ENCODE measurements at regions of chr1 and their contacts with region 1.

Region 1: GRCh38 chr1:92994105-92994712 is 32.9 kb upstream of the DIPK1A start:
- DNase-seq: peak; percentile 59 to 64
- H3K4me3 ChIP-seq: no peak overlapping the region
- H3K4me3 Mint-ChIP-seq: no peak overlapping the region
- H3K27ac Mint-ChIP-seq: no peak overlapping the region
- H3K4me1 ChIP-seq: 0 out of 2 replicates have a peak, but pooled peaks cover 3% of the 10 kb centered on the region
- H3K4me1 Mint-ChIP-seq: no peaks in the 10 kb centered on the region
- H3K27me3 ChIP-seq: no peaks in the 10 kb centered on the region
- H3K27me3 Mint-ChIP-seq: no peaks in the 10 kb centered on the region
- CTCF ChIP-seq: peak; percentile 40 to 51

Region 2: GRCh38 chr1:92461364-92462097 is 532.7 kb before region 1 on chr1:
- CTCF ChIA-PET with region 1: no interaction called
- POLR2A ChIA-PET with region 1: no interaction called
- intact Hi-C with region 1: no loop called
- DNase-seq: no peak
- H3K4me3 ChIP-seq: no peak overlapping the region
- H3K4me3 Mint-ChIP-seq: no peak overlapping the region
- H3K27ac Mint-ChIP-seq: no peak overlapping the region
- H3K4me1 ChIP-seq: no peaks in the 10 kb centered on the region; the same call in 1 of the 2 replicates
- H3K4me1 Mint-ChIP-seq: no peaks in the 10 kb centered on the region
- H3K27me3 ChIP-seq: no peaks in the 10 kb centered on the region
- H3K27me3 Mint-ChIP-seq: no peaks in the 10 kb centered on the region
- CTCF ChIP-seq: no peak

Region 3: GRCh38 chr1:92960395-92961130 is 33.6 kb before region 1 on chr1:
- CTCF ChIA-PET with region 1: interaction called, 14 read pairs
- POLR2A ChIA-PET with region 1: no interaction called
- intact Hi-C with region 1: loop called (anchors 1 kb)
- DNase-seq: peak; percentile 62 to 63
- H3K4me3 ChIP-seq: peak overlapping the region; percentile 78
- H3K4me3 Mint-ChIP-seq: peak overlapping the region; percentile 81
- H3K27ac Mint-ChIP-seq: peak overlapping the region; percentile 78
- H3K4me1 ChIP-seq: peaks cover 28% of the 10 kb centered on the region
- H3K4me1 Mint-ChIP-seq: peaks cover 18% of the 10 kb centered on the region
- H3K27me3 ChIP-seq: no peaks in the 10 kb centered on the region
- H3K27me3 Mint-ChIP-seq: no peaks in the 10 kb centered on the region
- CTCF ChIP-seq: peak; percentile 58 to 64

Region 4: DNA sequence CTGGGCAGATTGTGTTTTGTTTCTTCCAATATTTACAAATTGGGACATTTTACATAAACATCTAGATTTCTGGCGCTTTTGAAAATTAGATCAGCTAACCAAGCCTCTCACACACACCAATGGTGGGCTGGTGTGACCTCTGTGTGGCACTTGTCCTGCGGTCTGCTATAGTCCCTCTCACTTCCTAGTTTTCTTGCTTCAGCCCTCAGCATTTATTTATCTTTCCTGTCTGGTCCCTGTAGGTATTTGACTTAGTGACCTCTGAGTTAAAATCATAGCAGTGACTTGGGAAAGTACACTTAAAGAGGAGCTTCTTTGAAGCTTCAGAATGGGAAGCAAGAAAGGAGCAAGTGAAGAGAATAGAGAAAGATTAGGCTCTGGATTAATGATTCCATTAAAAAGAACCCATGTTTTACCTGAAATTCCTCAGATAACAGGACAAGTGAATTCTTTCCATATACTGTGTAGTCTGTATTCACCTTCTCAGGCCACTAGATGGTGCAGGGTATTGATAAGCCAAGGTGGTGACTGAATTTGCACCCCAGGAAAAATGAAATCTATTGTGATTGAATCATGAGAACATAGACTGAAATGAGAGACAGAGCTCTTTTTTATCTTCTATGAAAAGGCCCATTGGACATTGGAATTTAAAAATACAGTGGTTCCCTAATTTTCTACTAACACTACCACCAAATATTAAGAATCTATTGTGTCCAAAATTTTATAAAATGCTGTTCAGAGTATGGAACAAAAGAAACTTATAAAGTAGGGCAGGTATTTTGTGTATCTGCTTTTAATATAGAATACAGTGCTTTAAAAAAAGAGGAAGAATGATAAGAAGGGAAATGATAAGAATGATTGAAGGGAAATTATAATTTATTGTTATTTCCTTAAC is 25.8 kb before region 1 on chr1:
- CTCF ChIA-PET with region 1: no interaction called
- POLR2A ChIA-PET with region 1: no interaction called
- intact Hi-C with region 1: loop called (anchors 1 kb)
- DNase-seq: peak in 1 of 2 experiments; percentile 30
- H3K4me3 ChIP-seq: no peak overlapping the region
- H3K4me3 Mint-ChIP-seq: no peak overlapping the region
- H3K27ac Mint-ChIP-seq: peak overlapping the region; percentile 19
- H3K4me1 ChIP-seq: peaks cover 11% of the 10 kb centered on the region
- H3K4me1 Mint-ChIP-seq: peaks cover 8% of the 10 kb centered on the region
- H3K27me3 ChIP-seq: no peaks in the 10 kb centered on the region
- H3K27me3 Mint-ChIP-seq: no peaks in the 10 kb centered on the region
- CTCF ChIP-seq: peak; percentile 44 to 59

Region 5: DNA sequence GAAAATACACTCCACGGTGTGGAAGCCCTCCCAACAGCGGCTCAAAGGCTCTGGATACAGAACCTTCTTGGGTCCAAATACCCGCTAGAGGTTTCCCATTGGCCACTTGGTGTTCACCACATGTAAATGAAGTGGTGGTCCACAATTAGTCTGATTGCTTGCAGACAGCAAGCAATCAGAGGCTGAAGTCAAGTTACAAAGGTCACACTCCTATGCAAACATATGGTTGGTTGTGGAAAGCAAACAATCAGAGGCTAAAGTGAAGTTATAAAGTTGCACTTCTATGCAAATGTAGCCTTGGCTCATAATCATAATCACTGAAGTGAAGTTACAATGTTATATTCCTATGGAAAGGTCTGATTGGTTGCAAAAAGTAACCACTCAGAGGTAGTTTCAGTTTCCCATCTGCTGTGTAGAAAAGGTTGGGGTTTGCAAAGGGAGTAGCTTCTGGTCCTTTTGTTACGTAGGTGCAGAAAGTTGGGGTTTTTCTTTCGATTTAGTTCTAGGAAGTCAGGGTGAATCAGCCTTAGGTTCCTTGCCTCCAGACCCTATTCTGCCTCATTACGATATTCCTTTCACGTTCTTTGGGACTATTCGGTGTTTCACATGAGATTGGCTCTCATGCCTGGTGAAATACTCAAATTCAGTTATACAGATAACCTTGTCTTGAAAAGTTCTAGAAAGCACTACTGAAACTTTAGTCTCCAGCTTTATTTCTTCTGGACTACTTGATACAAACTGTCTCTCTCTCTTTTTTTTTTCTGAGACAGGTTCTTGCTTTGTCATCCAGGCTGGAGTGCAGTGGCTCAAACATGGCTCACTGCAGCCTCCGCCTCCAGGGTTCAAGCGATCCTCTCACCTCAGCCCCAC is 48.2 kb after region 1 on chr1:
- CTCF ChIA-PET with region 1: no interaction called
- POLR2A ChIA-PET with region 1: no interaction called
- intact Hi-C with region 1: no loop called
- DNase-seq: no peak
- H3K4me3 ChIP-seq: peak overlapping the region; percentile 3; the same call in 1 of the 2 replicates
- H3K4me3 Mint-ChIP-seq: peak overlapping the region; percentile 38
- H3K27ac Mint-ChIP-seq: no peak overlapping the region
- H3K4me1 ChIP-seq: 0 out of 2 replicates have a peak, but pooled peaks cover 9% of the 10 kb centered on the region
- H3K4me1 Mint-ChIP-seq: peaks cover 9% of the 10 kb centered on the region
- H3K27me3 ChIP-seq: no peaks in the 10 kb centered on the region
- H3K27me3 Mint-ChIP-seq: no peaks in the 10 kb centered on the region
- CTCF ChIP-seq: no peak

Region 6: DNA sequence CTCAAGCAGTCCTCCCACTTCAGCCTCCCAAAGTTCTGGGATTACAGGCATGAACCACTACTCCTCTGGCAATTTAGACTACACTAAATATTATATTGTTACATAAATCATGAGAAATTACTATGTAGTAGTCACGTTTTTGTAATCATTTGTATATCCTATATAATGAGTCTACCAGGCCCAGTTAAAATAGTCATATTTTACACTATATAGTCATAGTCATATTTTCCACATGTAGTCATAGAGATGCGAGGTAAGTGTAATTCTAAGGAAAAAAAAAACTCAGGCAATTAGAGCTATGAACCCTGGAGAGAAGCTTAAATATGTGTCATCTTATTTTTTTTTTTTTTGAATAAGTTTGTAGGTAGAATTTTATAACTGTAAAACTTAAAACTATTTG is 543.7 kb after region 1 on chr1:
- CTCF ChIA-PET with region 1: no interaction called
- POLR2A ChIA-PET with region 1: no interaction called
- intact Hi-C with region 1: no loop called
- DNase-seq: no peak
- H3K4me3 ChIP-seq: no peak overlapping the region
- H3K4me3 Mint-ChIP-seq: no peak overlapping the region
- H3K27ac Mint-ChIP-seq: no peak overlapping the region
- H3K4me1 ChIP-seq: no peaks in the 10 kb centered on the region
- H3K4me1 Mint-ChIP-seq: no peaks in the 10 kb centered on the region
- H3K27me3 ChIP-seq: no peaks in the 10 kb centered on the region
- H3K27me3 Mint-ChIP-seq: no peaks in the 10 kb centered on the region
- CTCF ChIP-seq: no peak

Measured in Caco-2 (cell line).